ENCODE measurements at regions of chr9 and their contacts with region 1.

Region 1: DNA sequence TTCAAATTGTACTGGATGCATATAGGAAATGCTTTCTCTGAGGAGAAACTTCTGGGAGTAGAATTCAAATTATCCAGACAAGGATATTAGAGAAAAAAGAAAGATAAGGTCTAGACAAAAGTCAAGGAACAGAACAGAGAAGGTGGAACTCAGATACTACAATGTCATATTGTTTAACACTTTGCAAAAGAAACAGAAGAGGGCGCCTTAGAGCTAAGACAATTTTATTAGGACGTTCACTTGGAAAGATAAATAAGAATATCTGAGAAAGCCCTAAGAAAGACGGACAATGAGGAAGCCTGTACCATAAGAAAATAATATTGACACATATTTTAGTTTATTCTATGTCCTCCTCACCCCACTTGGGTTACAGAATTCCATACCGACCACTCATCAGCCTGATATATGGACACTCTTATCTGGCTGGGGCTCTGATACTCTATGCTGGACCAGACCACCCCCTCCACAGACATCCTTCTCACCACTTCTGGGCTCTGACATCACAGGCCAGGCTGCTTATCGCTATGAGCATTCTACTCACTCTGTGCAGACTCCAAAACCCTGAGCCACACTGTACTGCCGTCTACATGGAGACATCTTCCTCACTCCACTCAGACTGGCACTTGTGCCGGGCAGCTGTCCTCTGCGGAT is 9.1 kb upstream of the AK3 start:
- DNase-seq: peak; percentile 41 to 74 (median 61)
- H3K4me3 ChIP-seq: no peak overlapping the region
- H3K27ac ChIP-seq: no peak overlapping the region
- H3K4me1 ChIP-seq: no peaks in the 10 kb centered on the region
- H3K27me3 ChIP-seq: no peaks in the 10 kb centered on the region

Region 2: DNA sequence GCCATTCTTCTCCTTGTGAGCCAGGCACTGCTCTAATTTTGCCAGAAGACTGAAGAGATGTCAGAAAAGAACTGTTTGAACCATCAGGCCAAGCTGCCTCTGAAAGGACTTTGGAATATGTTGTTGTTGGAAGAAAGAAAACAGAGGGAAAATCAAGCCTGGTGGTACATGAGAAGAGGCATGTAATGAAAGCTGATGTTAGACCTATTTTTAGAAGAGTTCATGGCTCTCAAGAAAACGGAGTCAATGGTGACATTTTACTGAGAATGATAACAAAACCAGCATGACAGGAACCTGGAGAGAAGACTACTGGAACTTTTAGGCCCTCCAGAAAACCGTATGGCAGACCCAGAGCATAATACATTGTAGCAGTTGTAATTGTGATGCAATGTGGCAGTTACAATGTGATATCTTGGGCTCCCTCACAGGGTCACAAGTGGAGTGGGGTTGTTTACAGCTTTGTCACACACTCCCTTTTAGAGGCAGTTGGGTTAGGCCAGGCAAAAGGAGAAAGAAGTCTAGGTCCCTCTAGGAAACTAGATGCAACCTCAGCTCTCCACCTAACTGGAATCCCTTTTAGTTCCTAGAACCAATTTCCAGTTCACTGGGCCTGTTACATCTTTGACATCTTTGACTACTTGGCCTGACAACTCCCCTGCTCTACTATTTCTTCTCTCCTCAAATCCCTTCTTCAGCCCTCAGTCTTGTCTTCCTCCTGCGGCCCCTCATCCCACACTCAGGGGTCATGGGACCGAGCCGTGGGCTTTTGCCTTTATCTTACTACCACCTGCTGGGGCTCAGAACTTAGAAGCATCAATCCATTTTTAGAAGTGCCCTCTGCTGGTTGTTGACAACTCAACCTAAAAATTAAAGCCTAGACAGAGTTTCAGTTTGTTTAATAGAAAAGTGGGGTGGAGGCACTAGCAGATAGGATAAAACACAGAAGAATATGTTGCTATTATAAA is 173.7 kb after region 1 on chr9:
- CTCF ChIA-PET with region 1: interaction called, 10 read pairs
- POLR2A ChIA-PET with region 1: no interaction called
- DNase-seq: peak; percentile 62 to 76 (median 75)
- H3K4me3 ChIP-seq: no peak overlapping the region
- H3K27ac ChIP-seq: no peak overlapping the region
- H3K4me1 ChIP-seq: no peaks in the 10 kb centered on the region
- H3K27me3 ChIP-seq: no peaks in the 10 kb centered on the region

Region 3: GRCh38 chr9:5596173-5596572 is 846.0 kb after region 1 on chr9:
- CTCF ChIA-PET with region 1: interaction called, 10 read pairs
- POLR2A ChIA-PET with region 1: no interaction called
- DNase-seq: no peak
- H3K4me3 ChIP-seq: no peak overlapping the region
- H3K27ac ChIP-seq: no peak overlapping the region
- H3K4me1 ChIP-seq: peaks cover 0 to 12% (median 5%) of the 10 kb centered on the region in 4 experiments
- H3K27me3 ChIP-seq: no peaks in the 10 kb centered on the region